Activated CD4-positive, alpha-beta T cell treated with anti-CD3 and anti-CD28 coated beads for 36 hours (primary cell): ENCODE measurements at regions of chr3 and their contacts with region 1.

Region 1: DNA sequence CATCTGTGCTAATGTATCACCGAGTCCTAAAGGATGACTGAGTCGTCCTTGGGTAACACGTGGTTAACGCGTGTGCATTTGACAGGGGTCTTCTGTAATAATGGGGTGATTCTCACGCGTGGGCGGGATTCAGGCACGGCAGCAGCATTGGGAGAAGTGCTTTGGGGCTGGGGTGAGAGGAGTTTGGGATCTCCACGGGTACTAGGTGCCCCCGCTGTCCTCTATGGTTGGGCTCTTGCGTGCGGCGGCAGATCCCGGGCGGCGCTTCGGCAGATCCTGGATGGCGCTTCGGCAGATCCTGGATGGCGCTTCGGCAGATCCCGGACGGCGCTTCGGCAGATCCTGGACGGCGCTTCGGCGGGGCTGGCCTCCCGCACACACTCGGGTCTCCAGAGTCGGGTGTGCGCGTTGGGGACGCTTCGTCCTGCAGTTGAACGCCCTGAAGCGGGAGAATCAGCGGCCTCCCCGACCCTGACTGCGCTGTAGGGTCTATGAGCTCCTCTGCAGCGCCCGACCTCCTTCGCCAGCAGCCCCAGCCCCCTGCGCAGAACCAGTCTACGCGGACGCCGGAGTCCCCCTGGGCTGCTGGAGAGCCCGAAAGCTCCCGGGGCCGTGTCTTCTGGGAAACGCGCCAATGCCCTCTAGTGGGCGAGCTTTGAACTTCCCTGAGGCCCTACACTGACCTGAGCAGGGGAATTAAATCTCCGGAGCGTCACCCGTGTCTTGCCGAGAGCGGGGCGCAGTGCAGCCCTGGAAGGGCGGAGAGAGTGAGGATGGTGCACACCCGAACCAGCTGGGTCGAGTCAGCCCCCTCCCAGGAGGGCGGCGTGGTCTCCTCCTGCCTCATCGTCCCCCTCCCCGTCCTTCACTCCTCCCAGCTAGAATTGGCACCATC is 48.1 kb upstream of the EPHB3 start:
- DNase-seq: peak; percentile 91
- ATAC-seq: peak; percentile 99
- H3K4me3 Mint-ChIP-seq: peak overlapping the region; percentile 50
- H3K27ac Mint-ChIP-seq: no peak overlapping the region
- H3K4me1 Mint-ChIP-seq: peaks cover 9% of the 10 kb centered on the region
- H3K27me3 Mint-ChIP-seq: peaks cover 43% of the 10 kb centered on the region

Region 2: DNA sequence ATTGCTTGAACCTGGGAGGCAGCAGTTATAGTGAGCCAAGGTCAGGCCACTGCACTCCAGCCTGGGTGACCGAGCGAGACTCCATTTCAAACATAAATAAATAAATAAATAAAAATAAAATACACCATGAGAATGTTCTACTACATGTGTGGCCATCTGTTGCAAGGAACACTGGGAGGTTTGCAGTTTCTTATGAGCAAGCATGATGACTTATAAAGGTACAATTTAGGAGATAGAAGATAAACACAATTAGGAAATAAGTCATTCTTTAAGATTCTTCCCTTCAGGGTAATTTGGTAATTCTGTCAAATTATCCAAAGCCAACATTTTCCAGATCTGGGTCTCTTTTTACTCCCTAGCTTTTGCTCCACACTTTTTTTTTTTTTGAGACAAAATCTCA is 447.3 kb before region 1 on chr3:
- CTCF ChIA-PET with region 1: no interaction called
- POLR2A ChIA-PET with region 1: no interaction called
- intact Hi-C with region 1: no loop called
- DNase-seq: no peak
- ATAC-seq: no peak
- H3K4me3 Mint-ChIP-seq: no peak overlapping the region
- H3K27ac Mint-ChIP-seq: no peak overlapping the region
- H3K4me1 Mint-ChIP-seq: no peaks in the 10 kb centered on the region
- H3K27me3 Mint-ChIP-seq: peaks cover 4% of the 10 kb centered on the region

Region 3: DNA sequence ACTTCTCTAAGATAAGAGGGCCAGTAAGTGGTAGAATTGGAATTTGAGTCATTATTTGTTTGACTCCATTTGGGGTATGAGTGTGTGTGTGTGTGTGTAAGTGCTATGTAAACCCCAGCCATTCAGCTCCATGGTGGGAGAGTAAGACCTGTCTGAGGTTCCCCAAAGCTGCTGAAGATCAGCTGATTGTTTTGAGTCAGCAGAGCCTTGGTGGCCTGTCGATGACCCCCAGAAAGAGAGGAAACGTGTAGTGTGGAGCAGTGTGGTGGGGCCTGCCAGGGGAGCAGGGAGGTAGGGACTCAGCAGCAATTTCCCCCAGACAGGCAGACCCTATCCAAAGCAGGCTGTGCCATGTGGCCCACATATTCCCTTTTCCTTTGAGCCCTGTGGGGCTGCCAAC is 353.1 kb before region 1 on chr3:
- CTCF ChIA-PET with region 1: no interaction called
- POLR2A ChIA-PET with region 1: no interaction called
- intact Hi-C with region 1: no loop called
- DNase-seq: no peak
- ATAC-seq: peak; percentile 32
- H3K4me3 Mint-ChIP-seq: no peak overlapping the region
- H3K27ac Mint-ChIP-seq: no peak overlapping the region
- H3K4me1 Mint-ChIP-seq: peaks cover 21% of the 10 kb centered on the region
- H3K27me3 Mint-ChIP-seq: no peaks in the 10 kb centered on the region

Region 4: DNA sequence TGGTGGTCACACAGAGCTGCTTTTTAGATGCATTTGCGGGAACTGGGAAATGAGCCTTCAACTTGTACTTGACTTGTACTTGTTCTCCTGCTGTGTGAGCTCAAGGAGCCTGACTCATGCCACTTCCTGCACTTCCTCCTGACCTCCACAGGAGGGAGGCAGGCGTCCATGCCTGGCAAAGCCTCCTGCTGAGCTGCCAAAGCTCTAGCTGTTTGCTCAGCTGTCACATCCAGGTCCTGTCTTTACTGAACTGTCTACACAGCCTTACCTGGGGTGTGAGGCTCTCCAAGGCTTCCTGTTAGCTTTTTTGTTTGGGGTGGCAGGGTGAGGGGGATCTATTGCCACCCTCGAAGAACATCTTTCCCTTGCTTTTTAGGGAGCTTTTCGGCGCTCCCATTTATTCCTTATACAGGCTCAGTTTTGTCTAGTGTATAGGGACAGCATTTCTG is 141.9 kb before region 1 on chr3:
- CTCF ChIA-PET with region 1: interaction called, 53 read pairs
- POLR2A ChIA-PET with region 1: interaction called, 3 read pairs
- intact Hi-C with region 1: loop called in 1 of 2 experiments (anchors 1 kb)
- DNase-seq: peak; percentile 81
- ATAC-seq: peak; percentile 95
- H3K4me3 Mint-ChIP-seq: no peak overlapping the region
- H3K27ac Mint-ChIP-seq: no peak overlapping the region
- H3K4me1 Mint-ChIP-seq: peaks cover 16% of the 10 kb centered on the region
- H3K27me3 Mint-ChIP-seq: peaks cover 3% of the 10 kb centered on the region

Region 5: GRCh38 chr3:184417619-184418327 is 95.8 kb before region 1 on chr3:
- CTCF ChIA-PET with region 1: interaction called, 39 read pairs
- POLR2A ChIA-PET with region 1: no interaction called
- intact Hi-C with region 1: loop called (anchors 1 kb)
- DNase-seq: peak; percentile 86
- ATAC-seq: peak; percentile 97
- H3K4me3 Mint-ChIP-seq: no peak overlapping the region
- H3K27ac Mint-ChIP-seq: no peak overlapping the region
- H3K4me1 Mint-ChIP-seq: peaks cover 2% of the 10 kb centered on the region
- H3K27me3 Mint-ChIP-seq: no peaks in the 10 kb centered on the region

Region 6: DNA sequence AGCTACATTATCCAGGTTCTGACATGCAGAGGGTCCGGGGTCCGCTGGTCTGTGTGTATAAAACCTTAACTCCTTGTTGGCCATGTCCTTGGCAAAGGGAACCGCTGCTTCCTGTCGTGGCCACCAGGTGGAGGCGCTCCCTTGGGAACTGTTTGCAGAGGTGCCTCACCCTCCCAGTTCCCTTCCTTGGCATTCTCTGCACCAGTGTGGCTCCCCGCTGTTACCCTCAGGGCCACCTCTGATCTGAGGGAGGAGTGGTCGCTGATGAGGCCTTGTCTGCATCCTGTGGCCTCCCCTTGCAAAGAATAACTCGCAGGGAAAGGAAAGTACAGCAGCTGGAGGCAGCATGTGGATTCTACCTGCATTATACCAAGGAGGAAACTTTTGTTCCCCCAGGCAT is 44.1 kb before region 1 on chr3:
- CTCF ChIA-PET with region 1: interaction called, 27 read pairs
- POLR2A ChIA-PET with region 1: no interaction called
- intact Hi-C with region 1: loop called (anchors 1 kb)
- DNase-seq: peak; percentile 73
- ATAC-seq: no peak
- H3K4me3 Mint-ChIP-seq: no peak overlapping the region
- H3K27ac Mint-ChIP-seq: no peak overlapping the region
- H3K4me1 Mint-ChIP-seq: peaks cover 16% of the 10 kb centered on the region
- H3K27me3 Mint-ChIP-seq: peaks cover 10% of the 10 kb centered on the region

Region 7: DNA sequence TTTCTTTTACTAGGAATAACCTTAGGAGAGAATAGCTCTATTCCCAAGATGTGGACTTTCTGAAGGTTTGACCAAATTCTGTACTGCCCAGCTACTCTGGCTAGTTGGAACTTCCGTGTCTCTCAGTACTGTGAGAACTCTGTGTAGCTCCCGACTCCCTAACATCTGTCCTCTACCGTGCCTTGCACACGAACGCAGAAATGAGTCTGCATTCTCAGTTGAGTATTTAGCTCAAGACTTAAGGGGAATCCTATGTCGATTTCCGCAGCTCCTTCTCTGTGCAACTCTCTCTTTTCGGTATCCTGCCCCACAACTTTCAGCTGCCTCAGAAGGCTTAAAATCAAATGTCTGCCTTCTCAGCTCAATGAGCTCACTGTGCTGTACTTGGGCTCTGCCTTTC is 38.6 kb before region 1 on chr3:
- CTCF ChIA-PET with region 1: interaction called, 27 read pairs
- POLR2A ChIA-PET with region 1: no interaction called
- intact Hi-C with region 1: no loop called
- DNase-seq: no peak
- ATAC-seq: no peak
- H3K4me3 Mint-ChIP-seq: no peak overlapping the region
- H3K27ac Mint-ChIP-seq: no peak overlapping the region
- H3K4me1 Mint-ChIP-seq: peaks cover 16% of the 10 kb centered on the region
- H3K27me3 Mint-ChIP-seq: peaks cover 15% of the 10 kb centered on the region

Region 8: GRCh38 chr3:184523825-184524615 is 10.5 kb after region 1 on chr3:
- CTCF ChIA-PET with region 1: interaction called, 15 read pairs
- POLR2A ChIA-PET with region 1: no interaction called
- intact Hi-C with region 1: no loop called
- DNase-seq: peak; percentile 60
- ATAC-seq: peak; percentile 90
- H3K4me3 Mint-ChIP-seq: no peak overlapping the region
- H3K27ac Mint-ChIP-seq: peak overlapping the region; percentile 60
- H3K4me1 Mint-ChIP-seq: peaks cover 24% of the 10 kb centered on the region
- H3K27me3 Mint-ChIP-seq: peaks cover 16% of the 10 kb centered on the region

Region 9: GRCh38 chr3:184531626-184532280 is 18.2 kb after region 1 on chr3:
- CTCF ChIA-PET with region 1: interaction called, 15 read pairs
- POLR2A ChIA-PET with region 1: no interaction called
- intact Hi-C with region 1: no loop called
- DNase-seq: no peak
- ATAC-seq: no peak
- H3K4me3 Mint-ChIP-seq: no peak overlapping the region
- H3K27ac Mint-ChIP-seq: no peak overlapping the region
- H3K4me1 Mint-ChIP-seq: no peaks in the 10 kb centered on the region
- H3K27me3 Mint-ChIP-seq: peaks cover 17% of the 10 kb centered on the region

Region 10: DNA sequence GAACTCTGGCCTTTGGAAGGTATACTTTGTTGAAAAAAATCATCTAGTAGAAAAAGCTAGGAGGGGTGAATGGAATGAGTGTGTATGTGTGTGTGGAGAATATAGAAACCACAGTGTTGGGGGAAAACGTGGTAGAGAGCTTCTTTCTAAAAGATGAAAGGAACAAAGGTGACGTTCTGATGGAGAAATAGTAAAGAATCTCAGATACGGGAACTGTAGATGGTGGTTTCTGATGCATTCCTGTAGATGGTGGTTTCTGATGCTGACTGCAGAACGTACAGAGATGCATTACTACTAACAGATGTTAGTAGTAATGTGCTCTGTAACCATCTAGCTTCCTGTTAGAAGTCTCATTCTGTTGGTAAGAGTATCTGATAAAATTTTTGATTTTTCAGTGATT is 358.7 kb after region 1 on chr3:
- CTCF ChIA-PET with region 1: no interaction called
- POLR2A ChIA-PET with region 1: no interaction called
- intact Hi-C with region 1: no loop called
- DNase-seq: no peak
- ATAC-seq: peak; percentile 91
- H3K4me3 Mint-ChIP-seq: no peak overlapping the region
- H3K27ac Mint-ChIP-seq: no peak overlapping the region
- H3K4me1 Mint-ChIP-seq: peaks cover 5% of the 10 kb centered on the region
- H3K27me3 Mint-ChIP-seq: no peaks in the 10 kb centered on the region

Region 11: GRCh38 chr3:185711255-185711870 is 1197.8 kb after region 1 on chr3:
- CTCF ChIA-PET with region 1: no interaction called
- POLR2A ChIA-PET with region 1: no interaction called
- intact Hi-C with region 1: no loop called
- DNase-seq: no peak
- ATAC-seq: no peak
- H3K4me3 Mint-ChIP-seq: no peak overlapping the region
- H3K27ac Mint-ChIP-seq: no peak overlapping the region
- H3K4me1 Mint-ChIP-seq: no peaks in the 10 kb centered on the region
- H3K27me3 Mint-ChIP-seq: peaks cover 12% of the 10 kb centered on the region